Activated naive CD4-positive, alpha-beta T cell treated with anti-CD3 and anti-CD28 coated beads for 36 hours (primary cell): ENCODE measurements at regions of chr2 and their contacts with region 1.

Region 1: GRCh38 chr2:2613279-2614199 is 282.5 kb upstream of the MYT1L start:
- DNase-seq: peak; percentile 96
- H3K4me3 Mint-ChIP-seq: peak overlapping the region; percentile 76
- H3K27ac Mint-ChIP-seq: peak overlapping the region; percentile 79
- H3K4me1 Mint-ChIP-seq: peaks cover 8% of the 10 kb centered on the region
- H3K27me3 Mint-ChIP-seq: no peaks in the 10 kb centered on the region

Region 2: DNA sequence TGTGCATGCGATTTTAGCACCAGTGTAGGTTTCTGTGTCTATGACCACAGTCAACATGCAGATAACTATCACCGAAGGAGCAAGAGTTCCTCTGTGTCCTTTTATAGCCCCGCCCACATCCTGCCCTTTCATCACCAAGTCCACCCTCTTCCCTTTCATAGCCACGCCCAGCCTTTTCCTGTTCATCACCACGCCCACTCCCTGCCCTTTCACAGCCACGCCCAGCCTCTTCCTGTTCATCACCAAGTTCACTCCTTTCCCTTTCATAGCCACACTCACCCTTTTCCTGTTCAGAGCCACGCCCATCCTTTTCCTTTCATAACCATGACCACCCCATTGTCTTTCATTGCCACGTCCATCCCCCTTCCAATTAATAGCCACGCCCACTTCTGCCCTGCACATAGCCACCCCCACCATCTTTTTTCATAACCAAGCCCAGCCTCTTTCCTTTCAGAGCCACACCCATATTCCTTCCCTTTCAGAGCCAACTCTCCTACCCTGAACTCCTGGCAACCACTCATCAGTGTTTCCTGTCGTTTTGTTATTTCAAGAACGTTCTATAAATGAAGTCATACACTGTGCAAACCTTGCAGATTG is 556.3 kb before region 1 on chr2:
- CTCF ChIA-PET with region 1: no interaction called
- intact Hi-C with region 1: loop called (anchors 1 kb)
- DNase-seq: peak; percentile 96
- H3K4me3 Mint-ChIP-seq: no peak overlapping the region
- H3K27ac Mint-ChIP-seq: peak overlapping the region; percentile 46
- H3K4me1 Mint-ChIP-seq: peaks cover 26% of the 10 kb centered on the region
- H3K27me3 Mint-ChIP-seq: no peaks in the 10 kb centered on the region

Region 3: DNA sequence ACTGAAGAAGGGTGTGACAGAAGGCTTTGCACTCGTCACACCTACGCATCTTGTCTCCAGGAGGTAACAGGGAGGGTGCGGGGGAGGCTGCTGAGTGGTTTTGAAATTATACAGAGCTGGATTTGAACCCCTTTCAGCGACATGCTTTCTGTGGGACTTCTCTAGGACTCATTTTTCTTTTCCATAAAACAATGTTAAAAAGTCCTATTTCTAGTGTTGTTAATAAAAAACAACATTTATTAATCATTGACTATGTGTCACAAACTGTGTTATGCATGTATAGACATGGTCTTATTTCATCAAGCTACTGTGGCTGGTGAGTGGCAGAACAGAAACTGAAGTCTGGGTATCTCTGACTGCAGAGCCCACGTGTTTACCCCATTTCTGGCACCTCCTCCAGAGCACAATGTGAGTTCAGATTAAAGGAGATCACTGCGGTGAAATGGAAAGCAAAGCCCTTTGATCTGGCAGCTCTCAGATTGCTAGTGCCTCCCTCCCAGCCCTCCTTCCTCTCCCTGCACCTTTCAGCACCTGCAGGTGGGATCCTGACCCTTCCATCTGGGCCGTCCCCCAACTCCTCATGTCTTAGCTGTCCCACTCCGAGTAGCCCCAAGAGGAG is 33.0 kb after region 1 on chr2:
- CTCF ChIA-PET with region 1: no interaction called
- intact Hi-C with region 1: loop called (anchors 1 kb)
- DNase-seq: peak; percentile 75
- H3K4me3 Mint-ChIP-seq: peak overlapping the region; percentile 8
- H3K27ac Mint-ChIP-seq: peak overlapping the region; percentile 69
- H3K4me1 Mint-ChIP-seq: peaks cover 40% of the 10 kb centered on the region
- H3K27me3 Mint-ChIP-seq: no peaks in the 10 kb centered on the region

Region 4: GRCh38 chr2:2686222-2686621 is 72.7 kb after region 1 on chr2:
- CTCF ChIA-PET with region 1: no interaction called
- intact Hi-C with region 1: loop called (anchors 2 kb)
- DNase-seq: peak; percentile 57
- H3K4me3 Mint-ChIP-seq: peak overlapping the region; percentile 56
- H3K27ac Mint-ChIP-seq: no peak overlapping the region
- H3K4me1 Mint-ChIP-seq: peaks cover 81% of the 10 kb centered on the region
- H3K27me3 Mint-ChIP-seq: no peaks in the 10 kb centered on the region

Region 5: DNA sequence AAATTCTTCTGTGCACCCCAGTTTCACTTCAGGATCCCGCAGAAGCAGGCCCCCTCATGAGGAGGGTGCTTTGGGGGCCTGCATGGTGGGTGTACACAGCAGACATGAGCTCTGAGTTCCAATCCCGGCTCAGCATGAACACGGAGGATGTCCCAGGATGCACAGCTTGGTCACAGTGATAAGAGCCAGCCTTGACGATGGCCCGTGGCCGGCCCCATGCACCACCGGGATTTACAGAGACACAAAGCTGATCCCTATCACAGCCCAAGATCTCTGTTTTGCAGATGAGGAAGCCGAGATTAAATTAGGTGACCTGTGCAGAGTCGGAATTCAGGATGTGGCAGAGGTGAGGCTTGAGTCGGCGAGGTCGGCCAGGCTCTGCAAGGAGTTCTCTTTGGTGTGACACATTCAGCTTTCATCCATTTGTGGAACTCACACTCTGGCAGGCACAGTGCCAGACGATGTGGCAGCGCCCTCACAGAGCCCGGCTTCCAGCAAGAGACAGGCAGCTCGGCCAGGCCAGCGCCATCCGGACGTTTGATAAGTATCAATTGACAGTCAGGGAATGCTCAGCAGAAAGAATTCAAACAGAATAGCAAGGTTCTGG is 173.9 kb after region 1 on chr2:
- CTCF ChIA-PET with region 1: no interaction called
- intact Hi-C with region 1: no loop called
- DNase-seq: no peak
- H3K4me3 Mint-ChIP-seq: no peak overlapping the region
- H3K27ac Mint-ChIP-seq: no peak overlapping the region
- H3K4me1 Mint-ChIP-seq: no peaks in the 10 kb centered on the region
- H3K27me3 Mint-ChIP-seq: peaks cover 8% of the 10 kb centered on the region

Region 6: GRCh38 chr2:2839782-2840531 is 226.4 kb after region 1 on chr2:
- CTCF ChIA-PET with region 1: no interaction called
- intact Hi-C with region 1: no loop called
- DNase-seq: no peak
- H3K4me3 Mint-ChIP-seq: no peak overlapping the region
- H3K27ac Mint-ChIP-seq: no peak overlapping the region
- H3K4me1 Mint-ChIP-seq: no peaks in the 10 kb centered on the region
- H3K27me3 Mint-ChIP-seq: no peaks in the 10 kb centered on the region